HCT116 (cell line): ENCODE measurements at regions of chr3 and their contacts with region 1.

Region 1: GRCh38 chr3:31768479-31769123 is 212.5 kb downstream of the OSBPL10 start:
- DNase-seq: peak; percentile 10
- ATAC-seq: peak; percentile 66
- H3K4me3 ChIP-seq: no peak overlapping the region
- H3K27ac ChIP-seq: no peak overlapping the region
- H3K4me1 ChIP-seq: no peaks in the 10 kb centered on the region
- H3K27me3 ChIP-seq: no peaks in the 10 kb centered on the region
- CTCF ChIP-seq: peak; percentile 48 to 51 (median 50); a peak in 4 of 6 replicates
- POLR2A ChIP-seq: no peak
- RAD21 ChIP-seq: peak; percentile 79

Region 2: GRCh38 chr3:30934208-30934550 is 834.4 kb before region 1 on chr3:
- CTCF ChIA-PET with region 1: no interaction called
- POLR2A ChIA-PET with region 1: no interaction called
- RAD21 ChIA-PET with region 1: no interaction called
- intact Hi-C with region 1: loop called (anchors 2 kb)
- DNase-seq: peak; percentile 40
- ATAC-seq: peak; percentile 77
- H3K4me3 ChIP-seq: no peak overlapping the region
- H3K27ac ChIP-seq: no peak overlapping the region
- H3K4me1 ChIP-seq: no peaks in the 10 kb centered on the region
- H3K27me3 ChIP-seq: no peaks in the 10 kb centered on the region
- CTCF ChIP-seq: peak; percentile 47 to 58 (median 49); a peak in 5 of 6 replicates
- POLR2A ChIP-seq: no peak
- RAD21 ChIP-seq: peak; percentile 72

Region 3: GRCh38 chr3:31550452-31551251 is 217.9 kb before region 1 on chr3:
- CTCF ChIA-PET with region 1: no interaction called
- POLR2A ChIA-PET with region 1: no interaction called
- RAD21 ChIA-PET with region 1: no interaction called
- intact Hi-C with region 1: loop called (anchors 2 kb)
- DNase-seq: no peak
- ATAC-seq: peak; percentile 71
- H3K4me3 ChIP-seq: no peak overlapping the region
- H3K27ac ChIP-seq: no peak overlapping the region
- H3K4me1 ChIP-seq: peaks cover 10 to 33% of the 10 kb centered on the region in 2 experiments; a peak in 3 of 4 replicates
- H3K27me3 ChIP-seq: no peaks in the 10 kb centered on the region
- CTCF ChIP-seq: peak; percentile 28 to 74 (median 61); a peak in 5 of 6 replicates
- POLR2A ChIP-seq: no peak
- RAD21 ChIP-seq: peak; percentile 53

Region 4: DNA sequence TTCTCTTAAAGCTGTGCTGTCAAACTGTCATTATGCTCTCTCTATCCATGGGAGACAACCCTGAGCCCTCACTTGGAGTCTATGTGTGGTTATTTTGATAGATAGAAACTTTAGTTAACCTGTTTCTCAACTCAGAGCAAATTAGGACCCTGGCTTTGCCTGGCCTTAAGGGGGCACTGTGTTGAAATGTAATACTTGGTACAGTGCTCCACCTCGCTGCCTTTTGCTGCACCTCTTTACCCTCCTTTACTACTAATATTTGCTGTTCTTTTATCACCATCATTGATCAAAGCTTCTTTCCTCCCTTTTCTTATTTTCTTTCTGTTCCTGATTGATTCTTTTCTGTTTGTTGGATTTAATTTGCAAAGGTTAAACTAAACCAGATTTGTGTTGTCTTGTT is 201.6 kb before region 1 on chr3:
- CTCF ChIA-PET with region 1: no interaction called
- POLR2A ChIA-PET with region 1: no interaction called
- RAD21 ChIA-PET with region 1: no interaction called
- intact Hi-C with region 1: no loop called
- DNase-seq: no peak
- ATAC-seq: peak; percentile 90
- H3K4me3 ChIP-seq: no peak overlapping the region
- H3K27ac ChIP-seq: no peak overlapping the region
- H3K4me1 ChIP-seq: peaks cover 0 to 6% of the 10 kb centered on the region in 2 experiments; a peak in 1 of 4 replicates
- H3K27me3 ChIP-seq: no peaks in the 10 kb centered on the region
- CTCF ChIP-seq: peak; percentile 30 to 72 (median 71); a peak in 5 of 6 replicates
- POLR2A ChIP-seq: no peak
- RAD21 ChIP-seq: peak; percentile 27; the same call in 1 of the 2 replicates

Region 5: GRCh38 chr3:31610700-31611275 is 157.8 kb before region 1 on chr3:
- CTCF ChIA-PET with region 1: interaction called, 3 read pairs
- POLR2A ChIA-PET with region 1: no interaction called
- RAD21 ChIA-PET with region 1: no interaction called
- intact Hi-C with region 1: loop called (anchors 1 kb)
- DNase-seq: peak; percentile 10
- ATAC-seq: peak; percentile 53; the same call in 1 of the 2 replicates
- H3K4me3 ChIP-seq: no peak overlapping the region
- H3K27ac ChIP-seq: no peak overlapping the region
- H3K4me1 ChIP-seq: 0 out of 4 replicates have a peak, but pooled peaks cover 0 to 5% of the 10 kb centered on the region in 2 experiments
- H3K27me3 ChIP-seq: no peaks in the 10 kb centered on the region
- CTCF ChIP-seq: peak; percentile 52 to 69 (median 53); a peak in 5 of 6 replicates
- POLR2A ChIP-seq: no peak
- RAD21 ChIP-seq: peak; percentile 66

Region 6: GRCh38 chr3:31634481-31634880 is 134.1 kb before region 1 on chr3:
- CTCF ChIA-PET with region 1: no interaction called
- POLR2A ChIA-PET with region 1: no interaction called
- RAD21 ChIA-PET with region 1: no interaction called
- intact Hi-C with region 1: no loop called
- DNase-seq: no peak
- ATAC-seq: no peak
- H3K4me3 ChIP-seq: no peak overlapping the region
- H3K27ac ChIP-seq: no peak overlapping the region
- H3K4me1 ChIP-seq: no peaks in the 10 kb centered on the region
- H3K27me3 ChIP-seq: no peaks in the 10 kb centered on the region
- CTCF ChIP-seq: no peak
- POLR2A ChIP-seq: no peak
- RAD21 ChIP-seq: no peak